ENCODE measurements at regions of chr11 and their contacts with region 1.

Region 1: GRCh38 chr11:47176328-47177228 is at the start of gene ARFGAP2:
- DNase-seq: peak; percentile 97
- H3K4me3 ChIP-seq: peak within 1 kb of the TSS; percentile 83
- H3K27ac ChIP-seq: peak within 1 kb of the TSS; percentile 83
- H3K4me1 ChIP-seq: peaks cover 14% of the 10 kb centered on the region
- H3K27me3 ChIP-seq: no peaks in the 10 kb centered on the region
- CTCF ChIP-seq: no peak
- total RNA-seq, gene ARFGAP2: 64.6 to 109 TPM

Region 2: DNA sequence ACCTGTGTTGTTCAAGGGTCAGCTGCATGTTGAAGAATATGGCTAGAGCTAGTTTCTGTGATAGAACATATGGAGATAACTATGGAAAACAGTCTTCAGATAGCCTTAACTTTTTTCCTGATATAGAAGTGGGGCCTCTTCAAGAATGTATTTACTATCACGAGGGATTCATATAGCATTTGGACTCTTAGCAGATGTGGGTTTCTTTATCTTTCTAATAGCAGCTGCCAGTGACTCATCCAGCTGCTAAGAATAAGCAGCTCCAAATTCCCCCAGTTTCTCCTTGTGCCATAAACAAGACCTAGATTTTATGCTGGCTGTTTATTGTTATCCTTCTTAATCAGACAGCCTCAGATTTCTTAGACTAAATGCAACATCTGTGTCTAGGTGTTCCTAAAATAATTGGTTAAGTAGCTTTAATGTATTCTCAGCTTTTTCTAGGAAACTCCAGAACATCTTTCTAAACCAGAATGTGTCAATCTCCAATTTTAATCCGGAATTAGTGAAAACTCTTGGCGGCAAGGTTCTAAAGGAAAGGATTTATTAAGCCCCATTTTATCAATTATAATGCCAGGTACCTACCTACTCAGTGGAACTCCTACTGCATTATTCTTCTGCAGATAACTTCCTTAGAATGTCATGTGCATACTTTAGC is 120.2 kb before region 1 on chr11:
- intact Hi-C with region 1: no loop called
- DNase-seq: no peak
- H3K4me3 ChIP-seq: no peak overlapping the region
- H3K27ac ChIP-seq: no peak overlapping the region
- H3K4me1 ChIP-seq: no peaks in the 10 kb centered on the region
- H3K27me3 ChIP-seq: no peaks in the 10 kb centered on the region
- CTCF ChIP-seq: no peak

Region 3: GRCh38 chr11:47213985-47214564 is 37.5 kb after region 1 on chr11:
- intact Hi-C with region 1: loop called (anchors 5 kb)
- DNase-seq: peak; percentile 95
- H3K4me3 ChIP-seq: peak overlapping the region; percentile 69
- H3K27ac ChIP-seq: peak overlapping the region; percentile 99
- H3K4me1 ChIP-seq: peaks cover 8% of the 10 kb centered on the region
- H3K27me3 ChIP-seq: no peaks in the 10 kb centered on the region
- CTCF ChIP-seq: no peak

Region 4: DNA sequence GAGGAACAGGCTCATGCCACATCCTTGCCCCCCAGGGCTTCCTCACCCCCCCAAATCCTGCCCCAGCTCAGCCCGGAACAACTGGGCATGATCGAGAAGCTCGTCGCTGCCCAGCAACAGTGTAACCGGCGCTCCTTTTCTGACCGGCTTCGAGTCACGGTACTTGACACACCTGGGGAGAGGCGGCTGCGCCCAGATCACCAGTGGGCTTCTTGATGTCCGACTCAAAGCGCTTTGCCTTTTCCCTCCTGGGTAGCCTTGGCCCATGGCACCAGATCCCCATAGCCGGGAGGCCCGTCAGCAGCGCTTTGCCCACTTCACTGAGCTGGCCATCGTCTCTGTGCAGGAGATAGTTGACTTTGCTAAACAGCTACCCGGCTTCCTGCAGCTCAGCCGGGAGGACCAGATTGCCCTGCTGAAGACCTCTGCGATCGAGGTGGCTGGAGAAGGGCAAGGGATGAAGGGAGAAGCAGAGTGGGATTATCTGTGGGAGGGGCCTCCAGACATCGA is 84.8 kb after region 1 on chr11:
- intact Hi-C with region 1: loop called (anchors 2 kb)
- DNase-seq: no peak
- H3K4me3 ChIP-seq: no peak overlapping the region
- H3K27ac ChIP-seq: no peak overlapping the region
- H3K4me1 ChIP-seq: peaks cover 10% of the 10 kb centered on the region
- H3K27me3 ChIP-seq: no peaks in the 10 kb centered on the region
- CTCF ChIP-seq: no peak

Region 5: DNA sequence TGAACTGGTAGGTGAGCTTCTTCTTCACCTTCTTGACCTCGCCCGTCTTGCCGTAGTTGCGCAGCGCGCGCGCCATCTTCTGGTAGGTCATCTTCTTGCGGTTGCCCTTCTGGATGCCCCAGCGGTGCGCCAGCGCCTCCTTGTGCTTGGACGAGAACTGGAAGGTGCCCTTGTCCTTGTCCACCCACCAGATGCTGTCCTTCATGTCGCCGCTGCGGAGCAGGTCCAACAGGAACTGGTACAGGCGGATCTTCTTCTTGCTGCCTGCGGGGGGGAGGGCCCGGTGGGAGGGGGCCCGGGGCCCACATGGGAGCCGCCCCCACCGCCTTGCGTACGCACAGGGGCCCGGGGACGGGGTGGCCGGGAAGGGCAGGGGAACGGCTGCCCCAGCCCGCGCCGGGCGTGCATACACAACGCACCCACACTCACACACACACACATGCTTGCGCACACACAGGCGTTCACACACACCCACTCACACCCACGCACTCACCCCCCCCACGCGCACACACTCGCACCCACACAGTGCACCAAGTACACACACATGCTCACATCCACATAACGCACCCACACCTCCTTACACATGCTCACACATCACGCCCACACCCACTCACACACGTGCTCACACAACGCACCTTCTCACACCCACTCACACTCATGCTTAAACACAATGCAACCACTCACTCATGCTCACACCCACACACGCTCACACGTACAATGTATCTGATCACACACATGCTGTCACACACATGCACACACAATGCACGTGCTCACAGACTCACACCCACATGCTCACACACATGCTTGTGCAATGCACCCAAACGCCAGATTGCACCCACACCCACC is 178.9 kb after region 1 on chr11:
- intact Hi-C with region 1: loop called (anchors 5 kb)
- DNase-seq: peak; percentile 99
- H3K4me3 ChIP-seq: peak overlapping the region; percentile 41
- H3K27ac ChIP-seq: no peak overlapping the region
- H3K4me1 ChIP-seq: no peaks in the 10 kb centered on the region
- H3K27me3 ChIP-seq: no peaks in the 10 kb centered on the region
- CTCF ChIP-seq: peak; percentile 89

Measured in colonic mucosa (tissue), 4 donors.